GM12878 (cell line): ENCODE measurements at regions of chr1 and their contacts with region 1.

Region 1: DNA sequence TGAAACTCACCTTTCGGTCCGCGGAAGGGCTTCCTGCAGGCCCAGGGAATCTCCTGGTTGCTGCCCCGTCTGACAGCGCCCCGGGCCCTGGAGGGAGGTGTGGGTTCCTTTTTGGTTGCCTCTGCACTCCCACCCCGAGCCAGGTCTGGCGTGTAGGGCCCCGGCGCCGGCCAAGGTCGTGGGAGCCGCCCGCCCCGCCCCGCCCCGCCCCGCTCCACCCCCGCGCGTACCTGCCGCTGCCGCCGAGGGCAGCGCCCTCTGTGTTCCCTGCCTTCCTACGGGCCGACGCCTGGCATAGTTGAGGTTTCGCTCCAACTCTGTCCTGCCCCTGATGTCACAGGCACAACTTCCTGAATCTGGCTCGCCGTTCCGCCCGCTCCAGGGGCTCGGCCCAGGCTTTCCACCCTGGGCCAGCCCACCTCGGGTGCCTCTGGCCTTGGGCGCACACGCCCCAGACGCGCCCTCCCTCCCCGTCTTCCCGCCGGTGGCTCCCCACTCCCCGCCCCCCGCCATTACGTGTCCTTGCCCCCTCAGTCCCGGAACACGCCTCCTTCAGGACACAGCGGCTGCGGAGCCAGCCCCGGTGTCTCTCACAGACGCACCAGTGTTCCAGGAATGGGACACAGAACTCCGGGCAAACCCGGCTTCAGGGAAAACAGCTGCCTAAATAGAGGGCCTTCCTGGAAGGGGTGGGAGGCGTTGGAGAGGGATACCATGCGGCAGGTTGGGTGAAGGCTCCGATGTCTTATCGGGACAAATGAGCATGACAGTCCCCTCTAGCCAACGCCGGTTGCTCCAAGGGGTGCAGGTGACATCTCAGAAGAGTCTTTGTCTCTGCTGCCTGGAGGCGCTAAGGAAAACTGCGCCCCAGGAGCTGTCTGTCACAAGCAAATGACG is at the start of gene KIAA0040:
- DNase-seq: no peak
- ATAC-seq: peak; percentile 78
- H3K4me3 ChIP-seq: peak within 1 kb of the TSS; percentile 83
- H3K27ac ChIP-seq: peak within 1 kb of the TSS; percentile 23
- H3K4me1 ChIP-seq: peaks cover 37% of the 10 kb centered on the region
- H3K27me3 ChIP-seq: no peaks in the 10 kb centered on the region
- CTCF ChIP-seq: peak in 1 of 3 experiments; percentile 27; a peak in 2 of 6 replicates
- EP300 ChIP-seq: no peak
- POLR2A ChIP-seq: peak; percentile 72
- RAD21 ChIP-seq: no peak
- polyA plus RNA-seq, gene KIAA0040: 7.6 to 8.3 TPM

Region 2: GRCh38 chr1:175146529-175147213 is 46.2 kb before region 1 on chr1:
- CTCF ChIA-PET with region 1: interaction called, 64 read pairs
- POLR2A ChIA-PET with region 1: interaction called, 5 read pairs
- RAD21 ChIA-PET with region 1: interaction called, 16 read pairs
- SMC1A ChIA-PET with region 1: interaction called, 5 read pairs
- in situ Hi-C with region 1: no loop called
- intact Hi-C with region 1: no loop called
- DNase-seq: no peak
- ATAC-seq: peak; percentile 80
- H3K4me3 ChIP-seq: no peak overlapping the region
- H3K27ac ChIP-seq: no peak overlapping the region
- H3K4me1 ChIP-seq: peaks cover 11% of the 10 kb centered on the region
- H3K27me3 ChIP-seq: peaks cover 0 to 2% of the 10 kb centered on the region in 2 experiments; a peak in 2 of 4 replicates
- CTCF ChIP-seq: peak; percentile 86 to 94 (median 87)
- EP300 ChIP-seq: no peak
- POLR2A ChIP-seq: no peak
- RAD21 ChIP-seq: peak; percentile 60

Region 3: DNA sequence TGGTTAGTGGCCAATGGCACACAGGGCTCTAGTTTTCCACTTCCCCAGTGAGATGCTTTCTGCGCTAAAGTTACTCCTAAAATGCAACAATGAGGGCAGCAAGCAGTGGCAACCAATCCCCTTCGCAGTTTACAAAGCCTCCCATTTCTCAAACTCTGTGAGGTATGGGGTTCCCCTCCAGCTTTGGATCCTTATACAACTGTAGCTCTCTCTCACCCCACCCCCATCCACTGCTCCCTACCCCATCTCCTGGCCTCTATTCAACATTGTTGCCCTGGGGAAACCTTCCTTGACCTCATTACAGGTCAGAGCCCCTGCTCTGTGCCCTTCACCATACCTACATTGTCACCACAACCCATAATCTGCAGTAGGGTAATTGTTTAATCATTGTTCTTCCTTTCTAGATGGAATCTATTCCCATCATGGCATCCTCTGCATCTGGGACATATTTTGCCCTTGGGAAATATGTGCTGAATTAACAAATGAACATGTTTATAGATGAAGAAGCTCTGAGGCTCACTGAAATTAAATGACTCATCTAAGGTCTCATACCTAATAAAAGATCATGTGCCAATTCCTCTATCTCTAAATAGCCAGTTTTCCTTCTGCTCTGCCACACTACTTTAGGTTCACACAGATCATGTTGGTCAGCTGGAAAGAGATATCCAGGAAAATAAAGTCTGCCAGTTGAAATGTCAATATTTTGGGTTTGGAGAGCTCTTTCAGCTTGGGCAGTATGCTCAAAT is 12.9 kb before region 1 on chr1:
- CTCF ChIA-PET with region 1: interaction called, 11 read pairs
- POLR2A ChIA-PET with region 1: interaction called, 6 read pairs
- RAD21 ChIA-PET with region 1: interaction called, 3 read pairs
- SMC1A ChIA-PET with region 1: interaction called, 18 read pairs
- in situ Hi-C with region 1: no loop called
- intact Hi-C with region 1: no loop called
- DNase-seq: no peak
- ATAC-seq: peak; percentile 31; the same call in 1 of the 3 replicates
- H3K4me3 ChIP-seq: no peak overlapping the region
- H3K27ac ChIP-seq: no peak overlapping the region
- H3K4me1 ChIP-seq: peaks cover 11% of the 10 kb centered on the region
- H3K27me3 ChIP-seq: no peaks in the 10 kb centered on the region
- CTCF ChIP-seq: no peak
- EP300 ChIP-seq: no peak
- POLR2A ChIP-seq: no peak
- RAD21 ChIP-seq: no peak

Region 4: GRCh38 chr1:175216444-175216843 is 23.6 kb after region 1 on chr1:
- CTCF ChIA-PET with region 1: interaction called, 6 read pairs
- POLR2A ChIA-PET with region 1: interaction called, 4 read pairs
- RAD21 ChIA-PET with region 1: interaction called, 3 read pairs
- SMC1A ChIA-PET with region 1: interaction called, 28 read pairs
- in situ Hi-C with region 1: no loop called
- intact Hi-C with region 1: no loop called
- DNase-seq: no peak
- ATAC-seq: no peak
- H3K4me3 ChIP-seq: no peak overlapping the region
- H3K27ac ChIP-seq: no peak overlapping the region
- H3K4me1 ChIP-seq: peaks cover 14% of the 10 kb centered on the region
- H3K27me3 ChIP-seq: no peaks in the 10 kb centered on the region
- CTCF ChIP-seq: no peak
- EP300 ChIP-seq: no peak
- POLR2A ChIP-seq: no peak
- RAD21 ChIP-seq: no peak

Region 5: GRCh38 chr1:175307160-175307559 is 114.3 kb after region 1 on chr1:
- CTCF ChIA-PET with region 1: interaction called, 3 read pairs
- POLR2A ChIA-PET with region 1: interaction called, 3 read pairs
- RAD21 ChIA-PET with region 1: interaction called, 12 read pairs
- SMC1A ChIA-PET with region 1: interaction called, 8 read pairs
- in situ Hi-C with region 1: no loop called
- intact Hi-C with region 1: no loop called
- DNase-seq: no peak
- ATAC-seq: peak; percentile 88
- H3K4me3 ChIP-seq: no peak overlapping the region
- H3K27ac ChIP-seq: no peak overlapping the region
- H3K4me1 ChIP-seq: peaks cover 6% of the 10 kb centered on the region
- H3K27me3 ChIP-seq: no peaks in the 10 kb centered on the region
- CTCF ChIP-seq: no peak
- EP300 ChIP-seq: peak; percentile 70 to 88; a peak in 2 of 4 replicates
- POLR2A ChIP-seq: no peak
- RAD21 ChIP-seq: no peak